ENCODE measurements at regions of chr1 and their contacts with region 1.

Region 1: DNA sequence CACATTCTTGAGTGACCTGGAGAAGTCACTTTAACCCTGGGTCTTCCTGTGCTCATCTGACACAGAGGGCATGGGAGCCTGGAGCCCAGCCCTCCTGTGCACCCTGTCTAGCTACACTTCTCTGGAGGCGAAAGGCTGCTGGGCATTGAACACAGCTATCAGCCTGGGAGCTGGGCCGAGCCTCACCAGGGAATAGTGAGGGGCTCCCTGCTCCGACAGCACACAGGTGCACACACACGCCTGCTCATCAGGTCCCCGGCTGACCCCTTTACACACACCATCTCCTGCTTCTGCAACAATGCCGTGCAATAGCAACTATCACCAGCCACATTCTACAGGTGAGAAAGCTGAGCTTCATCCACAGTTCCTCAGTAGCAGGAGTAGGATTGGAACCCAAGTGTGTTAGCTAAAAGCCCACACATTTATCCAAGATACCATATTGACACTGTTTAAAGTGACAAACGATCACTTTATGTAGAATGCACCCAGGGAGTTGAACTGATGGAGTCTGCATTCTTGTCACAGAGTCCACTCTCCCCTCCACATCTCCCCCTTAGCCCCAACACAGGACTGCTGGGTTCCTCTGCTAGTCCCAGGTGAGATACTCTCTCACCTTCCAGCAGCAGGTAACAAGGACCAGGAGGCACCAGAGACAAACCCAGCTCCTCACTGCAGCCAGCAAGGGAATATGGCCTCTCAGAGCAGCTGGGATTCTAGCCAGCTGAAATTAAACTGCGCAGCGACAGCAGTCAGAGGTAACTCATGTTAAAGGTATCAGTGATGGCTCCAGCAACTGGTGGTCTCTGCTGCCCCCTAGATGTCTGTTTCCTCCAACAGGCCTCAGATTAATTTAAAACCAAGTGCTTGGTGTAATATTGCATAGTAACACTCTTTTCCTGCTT is 18.3 kb upstream of the CAPN8 start:
- DNase-seq: peak; percentile 62 to 84 (median 74)
- H3K4me3 ChIP-seq: no peak overlapping the region
- H3K27ac ChIP-seq: no peak overlapping the region
- H3K4me1 ChIP-seq: no peaks in the 10 kb centered on the region
- H3K27me3 ChIP-seq: peaks cover 0 to 6% (median 5%) of the 10 kb centered on the region in 5 experiments

Region 2: DNA sequence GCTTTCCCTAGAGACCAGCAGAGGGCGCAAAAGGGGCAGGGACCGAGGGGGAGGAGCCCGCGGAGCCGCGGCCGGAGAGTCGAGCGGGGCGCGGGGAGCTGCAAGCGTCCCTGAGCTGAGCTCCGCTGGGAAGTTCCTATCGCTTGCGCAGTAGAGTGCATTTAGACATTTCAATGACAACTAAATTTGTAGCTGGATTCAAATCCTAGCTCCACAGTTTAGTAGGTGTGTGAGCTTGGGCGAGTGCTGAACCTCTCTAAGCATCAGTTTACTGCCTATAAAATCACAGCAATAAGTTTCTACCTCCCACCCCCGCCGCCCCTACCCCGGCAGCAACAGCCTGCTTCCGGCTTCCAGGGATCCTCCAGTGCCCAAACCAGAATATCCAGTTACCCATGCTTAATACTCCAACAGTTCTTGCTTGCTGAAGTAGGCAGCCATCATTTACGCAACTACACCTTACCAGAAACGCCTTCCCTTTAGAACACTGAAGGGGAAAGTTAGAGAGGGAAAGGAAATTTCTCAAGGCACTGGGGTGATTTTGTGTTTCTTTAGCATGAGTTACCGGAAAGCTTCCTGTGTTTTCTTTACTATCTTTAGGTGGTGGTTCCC is 549.9 kb before region 1 on chr1:
- CTCF ChIA-PET with region 1: interaction called, 19 read pairs
- POLR2A ChIA-PET with region 1: no interaction called
- DNase-seq: peak; percentile 71 to 75 (median 72)
- H3K4me3 ChIP-seq: peak overlapping the region in 5 of 7 experiments; percentile 9 to 44 (median 30)
- H3K27ac ChIP-seq: no peak overlapping the region
- H3K4me1 ChIP-seq: peaks cover 4 to 16% (median 7%) of the 10 kb centered on the region in 4 experiments
- H3K27me3 ChIP-seq: peaks cover 0 to 55% (median 32%) of the 10 kb centered on the region in 5 experiments

Region 3: DNA sequence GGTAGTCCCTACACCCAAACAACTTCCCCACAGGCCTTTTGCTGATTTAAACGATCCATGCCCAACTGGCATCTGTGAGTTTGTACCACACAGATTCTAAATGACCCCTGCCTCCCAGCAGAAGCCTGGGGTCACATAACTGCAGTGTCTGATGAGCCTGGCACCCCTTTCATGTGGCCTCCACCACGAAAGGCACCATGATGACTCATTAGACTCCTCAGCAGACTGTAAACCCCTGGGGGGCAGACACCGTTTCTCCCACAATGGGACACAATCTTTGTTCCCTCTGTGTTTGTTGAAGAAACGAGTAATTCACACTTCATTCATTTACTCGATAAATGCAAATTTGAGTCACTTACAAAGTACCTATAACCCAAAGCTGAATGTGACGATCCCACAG is 209.0 kb before region 1 on chr1:
- CTCF ChIA-PET with region 1: no interaction called
- POLR2A ChIA-PET with region 1: no interaction called
- DNase-seq: no peak
- H3K4me3 ChIP-seq: no peak overlapping the region
- H3K27ac ChIP-seq: no peak overlapping the region
- H3K4me1 ChIP-seq: no peaks in the 10 kb centered on the region
- H3K27me3 ChIP-seq: peaks cover 0 to 35% (median 4%) of the 10 kb centered on the region in 5 experiments

Region 4: DNA sequence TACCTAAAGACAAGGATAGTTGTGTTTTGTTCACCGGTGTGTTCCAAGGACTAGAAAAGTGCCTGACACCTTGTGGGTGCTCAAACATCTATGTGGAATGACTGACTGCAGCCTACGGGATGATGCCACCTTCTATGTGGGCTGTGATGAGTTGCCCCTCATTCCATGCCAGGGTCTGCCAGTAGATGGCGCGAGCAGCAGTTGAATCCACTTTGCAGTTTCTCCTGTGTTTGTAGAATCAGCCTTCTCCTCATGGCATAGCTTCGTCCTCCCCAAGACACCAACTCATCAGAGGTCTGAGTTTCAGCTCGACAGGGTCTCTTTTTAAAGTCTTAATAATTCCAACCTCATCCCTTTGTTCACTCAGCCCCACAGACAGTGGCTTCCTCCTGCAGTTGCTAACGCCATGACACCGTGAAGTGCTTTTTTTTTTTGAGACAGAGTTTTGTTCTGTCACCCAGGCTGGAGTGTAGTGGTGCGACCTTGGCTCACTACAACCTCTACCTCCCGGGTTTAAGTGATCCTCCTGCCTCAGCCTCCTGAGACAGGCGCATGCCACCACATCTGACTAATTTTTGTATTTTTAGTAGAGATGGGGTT is 152.0 kb before region 1 on chr1:
- CTCF ChIA-PET with region 1: interaction called, 18 read pairs
- POLR2A ChIA-PET with region 1: interaction called, 3 read pairs
- DNase-seq: peak; percentile 42 to 69 (median 59)
- H3K4me3 ChIP-seq: no peak overlapping the region
- H3K27ac ChIP-seq: no peak overlapping the region
- H3K4me1 ChIP-seq: no peaks in the 10 kb centered on the region
- H3K27me3 ChIP-seq: peaks cover 0 to 4% (median under 1%) of the 10 kb centered on the region in 5 experiments

Region 5: DNA sequence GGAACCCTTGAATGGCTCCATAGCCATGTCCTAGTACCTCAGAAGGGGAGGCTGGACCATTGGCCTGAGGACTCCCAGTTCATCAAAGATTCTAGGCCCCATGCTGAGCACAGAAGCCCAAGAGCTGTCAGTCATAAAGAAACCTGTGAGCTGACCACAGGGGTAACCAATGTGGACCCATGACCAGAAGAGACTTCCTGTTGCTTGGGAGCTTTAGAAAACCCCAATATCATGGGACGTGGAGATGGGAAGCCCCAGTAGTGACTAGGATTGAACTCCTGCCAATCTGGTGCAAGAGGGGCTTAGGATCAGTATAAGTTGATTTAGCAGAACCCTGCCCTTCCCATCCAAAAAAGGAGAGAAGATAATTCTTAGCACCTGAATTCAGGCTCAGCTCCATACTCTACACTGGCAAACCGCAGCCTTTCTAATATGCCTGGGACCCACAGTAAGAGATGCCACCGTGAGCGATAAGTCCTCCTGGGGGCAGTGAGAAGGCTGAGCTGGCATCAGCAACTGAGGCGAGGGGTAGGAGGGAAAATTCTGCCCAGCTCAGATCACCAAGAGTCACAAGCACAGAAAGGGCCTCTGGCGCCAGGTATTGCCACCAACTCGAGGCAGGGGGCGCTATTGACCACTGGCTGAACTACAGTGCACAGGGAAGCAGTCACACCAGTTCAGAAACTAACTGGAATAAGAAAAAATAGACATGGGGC is 127.3 kb before region 1 on chr1:
- CTCF ChIA-PET with region 1: interaction called, 31 read pairs
- POLR2A ChIA-PET with region 1: interaction called, 3 read pairs
- DNase-seq: peak; percentile 54 to 74 (median 65)
- H3K4me3 ChIP-seq: no peak overlapping the region
- H3K27ac ChIP-seq: no peak overlapping the region
- H3K4me1 ChIP-seq: no peaks in the 10 kb centered on the region
- H3K27me3 ChIP-seq: no peaks in the 10 kb centered on the region

Region 6: DNA sequence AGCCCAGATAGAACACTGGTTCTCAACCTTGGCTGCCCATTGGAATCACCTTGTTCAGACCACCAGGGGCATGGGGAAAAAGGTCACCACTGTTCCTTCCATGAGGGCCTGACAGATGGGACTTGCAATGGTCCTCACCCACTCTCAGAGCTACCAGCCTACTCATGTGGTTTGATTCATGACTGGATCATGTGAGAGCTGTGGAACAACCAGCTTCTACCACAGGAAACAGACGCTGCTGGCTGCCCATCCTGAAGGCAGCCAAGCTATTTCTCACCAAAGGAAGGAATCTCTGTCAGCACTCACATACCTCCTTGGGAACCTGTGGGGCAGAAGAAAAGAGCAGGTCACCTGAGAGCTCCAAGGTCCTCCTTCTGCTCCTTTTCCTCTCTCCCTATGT is 71.9 kb before region 1 on chr1:
- CTCF ChIA-PET with region 1: interaction called, 17 read pairs
- POLR2A ChIA-PET with region 1: no interaction called
- DNase-seq: peak; percentile 87 to 95 (median 91)
- H3K4me3 ChIP-seq: no peak overlapping the region
- H3K27ac ChIP-seq: no peak overlapping the region
- H3K4me1 ChIP-seq: peaks cover 0 to 12% (median 8%) of the 10 kb centered on the region in 4 experiments
- H3K27me3 ChIP-seq: no peaks in the 10 kb centered on the region

Region 7: GRCh38 chr1:223704921-223705878 is 21.4 kb after region 1 on chr1:
- CTCF ChIA-PET with region 1: no interaction called
- POLR2A ChIA-PET with region 1: no interaction called
- DNase-seq: peak in 2 of 3 donors; percentile 43 to 56
- H3K4me3 ChIP-seq: peak overlapping the region in 3 of 7 experiments; percentile 24 to 54 (median 50)
- H3K27ac ChIP-seq: no peak overlapping the region
- H3K4me1 ChIP-seq: peaks cover 0 to 10% (median 5%) of the 10 kb centered on the region in 4 experiments
- H3K27me3 ChIP-seq: peaks cover 0 to 2% (median 0%) of the 10 kb centered on the region in 5 experiments

Region 8: DNA sequence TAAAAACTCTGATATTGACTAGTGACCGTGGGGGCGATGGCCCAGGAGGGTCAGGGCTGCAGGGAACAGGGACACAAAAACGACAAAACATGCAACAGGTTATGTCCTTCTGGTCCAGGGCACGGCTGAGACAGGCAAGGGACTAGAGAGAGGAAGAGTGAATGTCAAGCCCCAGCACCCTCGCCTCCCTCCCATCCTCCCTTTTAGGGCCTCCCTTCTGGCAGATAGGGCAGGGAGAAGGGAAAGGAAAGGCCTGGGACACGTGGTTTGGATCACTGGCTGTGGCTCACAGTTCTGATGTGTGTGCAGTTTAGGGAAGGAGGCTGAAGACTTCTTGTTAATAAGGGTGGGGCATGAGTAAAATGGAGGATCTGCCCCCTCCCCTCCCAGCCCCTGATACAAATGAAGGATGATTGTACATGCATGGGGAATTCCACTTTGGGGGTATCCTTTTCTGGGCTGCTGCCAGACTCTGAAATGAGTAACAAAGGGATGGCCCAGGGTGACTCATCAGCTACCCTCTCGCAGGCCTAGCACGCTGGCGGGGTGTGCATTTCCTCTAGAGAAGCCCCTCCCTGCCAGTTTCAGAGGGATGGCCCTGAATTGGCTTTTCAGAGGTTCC is 42.7 kb after region 1 on chr1:
- CTCF ChIA-PET with region 1: no interaction called
- POLR2A ChIA-PET with region 1: no interaction called
- DNase-seq: peak; percentile 94 to 99 (median 99)
- H3K4me3 ChIP-seq: peak overlapping the region in 3 of 7 experiments; percentile 13 to 60 (median 36)
- H3K27ac ChIP-seq: peak overlapping the region in 1 of 2 experiments; percentile 75
- H3K4me1 ChIP-seq: peaks cover 0 to 18% (median 17%) of the 10 kb centered on the region in 4 experiments
- H3K27me3 ChIP-seq: no peaks in the 10 kb centered on the region

Region 9: GRCh38 chr1:223776075-223776814 is 92.4 kb after region 1 on chr1:
- CTCF ChIA-PET with region 1: no interaction called
- POLR2A ChIA-PET with region 1: no interaction called
- DNase-seq: peak; percentile 51 to 75 (median 69)
- H3K4me3 ChIP-seq: peak overlapping the region in 1 of 7 experiments; percentile 18
- H3K27ac ChIP-seq: peak overlapping the region in 1 of 2 experiments; percentile 54
- H3K4me1 ChIP-seq: peaks cover 0 to 29% (median 9%) of the 10 kb centered on the region in 4 experiments
- H3K27me3 ChIP-seq: no peaks in the 10 kb centered on the region

Measured in common myeloid progenitor, CD34-positive (primary cell).